Naive thymus-derived CD4-positive, alpha-beta T cell (primary cell): ENCODE measurements at regions of chr17 and their contacts with region 1.

Region 1: DNA sequence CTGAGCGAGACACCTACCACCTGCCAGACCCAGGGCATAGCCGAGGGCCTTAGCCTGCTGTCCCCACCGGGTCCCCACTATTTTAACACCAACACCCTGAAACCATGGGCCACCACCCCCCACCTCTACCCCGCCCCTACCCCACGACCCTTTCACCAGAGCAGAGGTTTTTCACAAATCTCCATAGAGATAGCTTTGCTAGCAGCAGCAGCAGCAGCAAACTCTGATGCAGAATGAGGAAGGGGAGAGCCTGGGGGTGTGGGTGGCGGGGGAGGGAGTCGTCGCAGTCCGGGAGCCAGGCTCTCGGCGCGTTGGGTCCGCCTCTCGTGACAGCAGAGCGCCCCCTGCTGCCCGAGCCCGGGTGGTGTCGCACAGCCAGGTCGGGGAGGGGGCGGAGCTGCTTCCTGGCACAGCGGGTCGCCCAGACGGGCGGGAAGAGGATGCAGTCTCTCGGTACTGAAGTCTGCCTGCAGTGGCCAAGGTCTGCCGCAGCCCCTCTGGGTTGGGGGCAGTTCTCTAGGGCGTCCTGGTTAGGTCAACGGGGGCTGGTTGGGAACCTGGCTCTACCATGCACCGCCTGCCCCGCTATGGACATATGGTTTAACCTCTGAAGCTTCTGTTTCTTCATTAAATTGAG is 38.1 kb upstream of the CCDC182 start:
- DNase-seq: peak; percentile 52 to 88 (median 74)
- ATAC-seq: peak; percentile 95
- H3K4me3 ChIP-seq: no peak overlapping the region
- H3K4me3 Mint-ChIP-seq: peak overlapping the region in 2 of 10 donors; percentile 5 to 15
- H3K27ac ChIP-seq: no peak overlapping the region
- H3K27ac Mint-ChIP-seq: no peak overlapping the region
- H3K4me1 ChIP-seq: peaks cover 0 to 4% of the 10 kb centered on the region in 2 donors
- H3K4me1 Mint-ChIP-seq: peaks cover 0 to 7% (median 4%) of the 10 kb centered on the region in 7 donors
- H3K27me3 ChIP-seq: peaks cover 0 to 4% of the 10 kb centered on the region in 2 donors
- H3K27me3 Mint-ChIP-seq: peaks cover 11 to 28% (median 20%) of the 10 kb centered on the region in 5 donors

Region 2: GRCh38 chr17:57130761-57131461 is 652.3 kb before region 1 on chr17:
- CTCF ChIA-PET with region 1: interaction called, 4 read pairs
- POLR2A ChIA-PET with region 1: no interaction called
- intact Hi-C with region 1: loop called (anchors 1 kb)
- DNase-seq: peak; percentile 53 to 82 (median 75)
- ATAC-seq: peak; percentile 96
- H3K4me3 ChIP-seq: no peak overlapping the region
- H3K4me3 Mint-ChIP-seq: peak overlapping the region in 5 of 10 donors; percentile 14 to 53 (median 46)
- H3K27ac ChIP-seq: no peak overlapping the region
- H3K27ac Mint-ChIP-seq: no peak overlapping the region
- H3K4me1 ChIP-seq: peaks cover 0 to 6% of the 10 kb centered on the region in 2 donors
- H3K4me1 Mint-ChIP-seq: peaks cover 4 to 11% (median 8%) of the 10 kb centered on the region in 7 donors
- H3K27me3 ChIP-seq: no peaks in the 10 kb centered on the region
- H3K27me3 Mint-ChIP-seq: no peaks in the 10 kb centered on the region

Region 3: GRCh38 chr17:57755480-57756070 is 27.6 kb before region 1 on chr17:
- CTCF ChIA-PET with region 1: no interaction called
- POLR2A ChIA-PET with region 1: no interaction called
- intact Hi-C with region 1: no loop called
- DNase-seq: no peak
- ATAC-seq: no peak
- H3K4me3 ChIP-seq: no peak overlapping the region
- H3K4me3 Mint-ChIP-seq: no peak overlapping the region
- H3K27ac ChIP-seq: no peak overlapping the region
- H3K27ac Mint-ChIP-seq: no peak overlapping the region
- H3K4me1 ChIP-seq: no peaks in the 10 kb centered on the region
- H3K4me1 Mint-ChIP-seq: no peaks in the 10 kb centered on the region
- H3K27me3 ChIP-seq: no peaks in the 10 kb centered on the region
- H3K27me3 Mint-ChIP-seq: peaks cover 0 to 6% (median 0%) of the 10 kb centered on the region in 5 donors

Region 4: GRCh38 chr17:57927048-57927723 is 144.0 kb after region 1 on chr17:
- CTCF ChIA-PET with region 1: no interaction called
- POLR2A ChIA-PET with region 1: no interaction called
- intact Hi-C with region 1: no loop called
- DNase-seq: no peak
- ATAC-seq: no peak
- H3K4me3 ChIP-seq: no peak overlapping the region
- H3K4me3 Mint-ChIP-seq: no peak overlapping the region
- H3K27ac ChIP-seq: no peak overlapping the region
- H3K27ac Mint-ChIP-seq: peak overlapping the region in 1 of 9 donors; percentile 12
- H3K4me1 ChIP-seq: no peaks in the 10 kb centered on the region
- H3K4me1 Mint-ChIP-seq: peaks cover 0 to 5% (median 0%) of the 10 kb centered on the region in 7 donors
- H3K27me3 ChIP-seq: no peaks in the 10 kb centered on the region
- H3K27me3 Mint-ChIP-seq: peaks cover 0 to 46% (median 4%) of the 10 kb centered on the region in 5 donors